Transverse colon (tissue), 4 donors: ENCODE measurements at regions of chr15 and their contacts with region 1.

Region 1: GRCh38 chr15:34101366-34102175 is at the starts of genes EMC7 and PGBD4:
- DNase-seq: peak; percentile 99
- H3K4me3 ChIP-seq: peak within 1 kb of the TSS; percentile 61 to 89 (median 83)
- H3K27ac ChIP-seq: peak within 1 kb of the TSS; percentile 87 to 94 (median 90)
- H3K4me1 ChIP-seq: peaks cover 6 to 27% (median 16%) of the 10 kb centered on the region in 4 donors
- H3K27me3 ChIP-seq: no peaks in the 10 kb centered on the region
- CTCF ChIP-seq: no peak
- EP300 ChIP-seq: no peak
- POLR2A ChIP-seq: peak; percentile 91
- total RNA-seq, gene EMC7: 1.8 to 39.7 (median 24.5) TPM
- total RNA-seq, gene PGBD4: 1.1 to 7.6 (median 1.9) TPM

Region 2: DNA sequence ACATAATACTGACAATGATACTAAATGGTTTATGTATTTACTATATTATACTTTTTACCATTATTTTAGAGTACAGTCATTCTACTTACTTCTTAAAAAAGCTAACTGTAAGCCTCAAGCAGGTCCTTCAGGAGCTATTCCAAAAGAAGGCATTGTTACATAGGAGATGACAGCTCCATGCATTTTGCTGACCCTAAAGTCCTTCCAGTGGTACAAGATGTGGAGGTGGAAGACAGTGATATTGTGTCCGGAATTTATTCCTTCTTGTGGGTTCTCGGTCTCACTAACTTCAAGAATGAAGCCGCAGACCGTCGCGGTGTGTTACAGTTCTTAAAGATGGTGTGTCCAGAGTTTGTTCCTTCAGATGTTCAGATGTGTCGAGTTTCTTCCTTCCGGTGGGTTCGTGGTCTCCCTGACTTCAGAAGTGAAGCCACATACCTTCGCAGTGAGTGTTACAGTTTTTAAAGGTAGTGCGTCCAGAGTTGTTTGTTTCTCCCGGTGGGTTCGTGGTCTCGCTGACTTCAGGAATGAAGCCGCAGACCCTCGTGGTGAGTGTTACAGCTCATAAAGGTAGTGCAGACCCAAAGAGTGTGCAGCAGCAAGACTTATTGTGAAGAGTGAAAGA is 83.4 kb before region 1 on chr15:
- in situ Hi-C with region 1: loop called in 1 of 4 experiments (anchors 25 kb)
- intact Hi-C with region 1: no loop called
- DNase-seq: peak; percentile 30
- H3K4me3 ChIP-seq: no peak overlapping the region
- H3K27ac ChIP-seq: no peak overlapping the region
- H3K4me1 ChIP-seq: no peaks in the 10 kb centered on the region
- H3K27me3 ChIP-seq: no peaks in the 10 kb centered on the region
- CTCF ChIP-seq: no peak
- EP300 ChIP-seq: no peak
- POLR2A ChIP-seq: no peak

Region 3: GRCh38 chr15:34223904-34224596 is 122.5 kb after region 1 on chr15:
- in situ Hi-C with region 1: loop called (anchors 5 to 10 kb)
- intact Hi-C with region 1: loop called (anchors 5 kb)
- DNase-seq: peak; percentile 9
- H3K4me3 ChIP-seq: peak overlapping the region; percentile 67 to 87 (median 76)
- H3K27ac ChIP-seq: peak overlapping the region; percentile 85 to 93 (median 90)
- H3K4me1 ChIP-seq: peaks cover 7 to 24% (median 11%) of the 10 kb centered on the region in 4 donors
- H3K27me3 ChIP-seq: no peaks in the 10 kb centered on the region
- CTCF ChIP-seq: no peak
- EP300 ChIP-seq: no peak
- POLR2A ChIP-seq: no peak

Region 4: DNA sequence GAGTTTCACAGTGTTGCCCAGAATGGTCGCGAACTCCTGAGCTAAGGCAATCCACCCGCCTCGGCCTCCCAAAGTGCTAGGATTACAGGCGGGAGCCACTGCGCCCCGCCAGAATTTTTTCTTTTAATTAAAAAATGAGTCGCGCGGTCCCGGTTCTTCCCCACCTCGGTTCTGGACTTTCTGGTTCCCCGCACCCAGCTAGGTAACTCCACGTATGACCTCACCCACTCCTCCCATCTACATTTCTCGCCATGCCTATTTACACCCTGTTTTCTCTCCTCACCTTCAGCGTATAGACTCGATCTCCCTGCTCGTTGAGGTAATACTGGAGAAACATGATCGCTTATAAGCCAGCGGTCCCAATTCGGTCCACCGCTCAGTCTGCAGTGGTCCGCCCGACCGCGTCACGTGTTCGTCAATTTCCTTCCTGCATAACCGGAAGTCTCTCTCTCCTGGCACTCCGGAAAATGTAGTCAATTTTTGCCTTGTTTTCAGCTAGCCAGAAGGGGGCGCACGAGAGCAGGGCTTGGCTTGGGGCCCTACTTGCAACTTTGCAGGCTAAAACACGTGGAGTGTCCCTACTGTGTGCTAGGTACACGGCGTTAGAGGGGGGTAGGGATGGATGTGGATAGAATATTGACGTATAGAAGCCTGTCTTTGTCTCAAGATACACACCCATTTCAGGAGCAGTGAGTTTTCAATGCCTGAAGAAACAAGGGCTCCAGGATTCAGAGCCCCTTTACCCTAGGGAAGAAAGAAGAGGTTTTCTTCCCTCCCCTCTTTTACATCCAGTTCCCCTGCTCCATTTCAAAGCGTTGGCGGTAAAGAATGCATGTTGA is 241.4 kb after region 1 on chr15 and contains the starts of genes NOP10 and NUTM1:
- in situ Hi-C with region 1: loop called in 1 of 4 experiments (anchors 25 kb)
- intact Hi-C with region 1: loop called (anchors 10 kb)
- DNase-seq: peak; percentile 93
- H3K4me3 ChIP-seq: peak within 1 kb of the TSS; percentile 75 to 98 (median 87)
- H3K27ac ChIP-seq: peak within 1 kb of the TSS; percentile 89 to 99 (median 94)
- H3K4me1 ChIP-seq: peaks cover 0 to 26% (median 8%) of the 10 kb centered on the region in 4 donors
- H3K27me3 ChIP-seq: no peaks in the 10 kb centered on the region
- CTCF ChIP-seq: peak; percentile 91 to 99 (median 97)
- EP300 ChIP-seq: no peak
- POLR2A ChIP-seq: peak; percentile 85
- total RNA-seq, gene NOP10: 41.1 to 166 (median 152) TPM
- total RNA-seq, gene NUTM1: not detected

Region 5: GRCh38 chr15:34367101-34368081 is 265.8 kb after region 1 on chr15 and contains the start of gene LPCAT4:
- in situ Hi-C with region 1: loop called in 3 of 4 experiments (anchors 25 kb)
- intact Hi-C with region 1: no loop called
- DNase-seq: peak; percentile 94
- H3K4me3 ChIP-seq: peak within 1 kb of the TSS; percentile 72 to 95 (median 92)
- H3K27ac ChIP-seq: peak within 1 kb of the TSS; percentile 98 to 100 (median 99)
- H3K4me1 ChIP-seq: peaks cover 5 to 49% (median 36%) of the 10 kb centered on the region in 4 donors
- H3K27me3 ChIP-seq: no peaks in the 10 kb centered on the region
- CTCF ChIP-seq: peak; percentile 96 to 99 (median 97)
- EP300 ChIP-seq: no peak
- POLR2A ChIP-seq: peak; percentile 91
- total RNA-seq, gene LPCAT4: 109 to 380 (median 143) TPM